AG04449 (cell line): ENCODE measurements at regions of chr11 and their contacts with region 1.

Region 1: GRCh38 chr11:131064373-131064991 is 148.2 kb upstream of the SNX19 start:
- DNase-seq: no peak
- H3K4me3 ChIP-seq: no peak overlapping the region
- CTCF ChIP-seq: peak; percentile 87

Region 2: GRCh38 chr11:130806746-130807145 is 257.7 kb before region 1 on chr11:
- CTCF ChIA-PET with region 1: no interaction called
- POLR2A ChIA-PET with region 1: no interaction called
- DNase-seq: no peak
- H3K4me3 ChIP-seq: no peak overlapping the region
- CTCF ChIP-seq: no peak

Region 3: DNA sequence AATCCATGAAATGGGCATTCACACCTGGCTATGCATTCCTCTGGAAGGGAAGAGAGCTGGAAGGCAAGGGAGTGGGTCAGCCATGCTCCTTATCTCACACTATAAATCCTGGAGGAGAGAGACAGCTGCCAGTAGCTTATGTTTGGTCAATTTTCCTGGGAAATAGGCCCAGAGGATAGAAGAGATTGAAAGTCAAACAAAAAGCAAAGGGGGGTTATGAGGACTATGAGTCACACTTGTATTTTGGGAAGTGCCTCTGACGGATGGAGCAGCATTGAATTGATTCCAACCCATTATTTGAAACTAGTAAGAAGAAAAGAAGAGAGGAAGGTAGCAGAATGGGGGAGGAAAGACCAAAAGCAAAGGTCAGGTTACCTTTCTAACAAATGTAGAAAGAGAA is 173.2 kb before region 1 on chr11:
- CTCF ChIA-PET with region 1: no interaction called
- POLR2A ChIA-PET with region 1: no interaction called
- DNase-seq: no peak
- H3K4me3 ChIP-seq: no peak overlapping the region
- CTCF ChIP-seq: no peak

Region 4: DNA sequence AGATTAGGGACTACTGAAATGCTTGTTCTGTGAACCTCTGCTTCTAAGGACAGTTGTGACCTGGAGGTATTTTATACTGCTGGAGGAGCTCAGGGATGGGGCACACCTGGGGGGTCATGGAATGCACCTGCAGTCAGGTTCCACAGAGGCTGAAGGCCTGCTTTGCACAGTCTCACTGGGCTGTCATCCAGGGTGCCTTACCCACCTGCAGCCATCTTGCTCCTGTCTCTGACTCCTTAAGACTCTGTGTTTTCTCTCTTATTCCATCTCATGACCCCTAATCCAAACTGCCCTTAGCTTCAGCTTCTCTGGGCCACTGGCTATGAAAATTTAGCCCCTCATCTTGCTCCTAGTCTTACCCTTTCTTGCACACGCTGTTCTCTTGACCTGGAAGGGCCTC is 21.2 kb before region 1 on chr11:
- CTCF ChIA-PET with region 1: interaction called, 30 read pairs
- POLR2A ChIA-PET with region 1: no interaction called
- DNase-seq: no peak
- H3K4me3 ChIP-seq: no peak overlapping the region
- CTCF ChIP-seq: no peak

Region 5: GRCh38 chr11:131089697-131090245 is 25.3 kb after region 1 on chr11:
- CTCF ChIA-PET with region 1: interaction called, 15 read pairs
- POLR2A ChIA-PET with region 1: no interaction called
- DNase-seq: no peak
- H3K4me3 ChIP-seq: no peak overlapping the region
- CTCF ChIP-seq: no peak

Region 6: DNA sequence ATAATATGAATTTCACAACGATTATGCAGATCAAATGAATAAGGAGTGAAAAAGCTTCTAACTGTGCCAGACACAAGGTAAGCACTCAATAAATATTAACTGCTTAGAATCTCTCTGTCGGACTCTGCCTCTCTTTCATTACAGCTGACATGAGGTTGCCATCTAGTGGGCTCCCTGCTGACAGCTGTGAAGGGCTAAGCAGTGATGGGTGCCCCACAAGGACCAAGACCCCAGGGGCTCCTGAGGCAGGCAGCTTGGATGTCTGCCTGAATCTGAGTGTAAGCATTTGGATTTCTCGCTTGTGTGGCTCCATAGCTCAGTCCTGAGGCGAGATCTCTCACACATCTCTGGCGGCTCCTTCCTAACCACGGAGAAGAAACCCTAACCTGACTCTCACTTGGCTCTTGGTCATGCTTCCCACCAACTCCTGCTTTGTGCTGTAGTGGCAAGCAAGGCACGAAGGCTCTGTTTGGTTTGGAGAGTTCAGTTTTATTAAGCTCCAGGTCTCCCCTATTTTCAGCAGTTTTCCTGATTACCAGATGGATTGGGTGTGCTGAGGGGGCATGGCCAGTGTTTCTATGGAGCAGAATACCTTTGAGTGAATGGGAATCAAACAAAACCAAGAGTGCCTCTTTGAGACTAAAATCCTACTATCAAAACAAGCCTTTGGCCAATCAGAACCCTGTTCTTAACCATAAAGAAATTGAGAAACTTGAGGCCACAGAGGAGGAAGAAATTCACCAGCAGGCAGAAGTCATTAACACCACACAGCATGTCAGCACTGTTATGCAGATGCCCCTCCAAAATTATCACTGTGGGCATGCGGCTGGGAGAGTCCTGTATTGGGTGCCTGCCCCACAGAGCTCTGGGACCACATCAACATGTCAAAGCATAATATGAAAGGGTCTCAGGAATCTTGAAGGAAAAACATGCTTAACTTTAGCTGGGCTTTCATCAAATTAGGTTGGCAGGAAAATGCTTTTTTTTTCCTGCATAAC is 153.1 kb after region 1 on chr11:
- CTCF ChIA-PET with region 1: interaction called, 221 read pairs
- POLR2A ChIA-PET with region 1: no interaction called
- DNase-seq: no peak
- H3K4me3 ChIP-seq: no peak overlapping the region
- CTCF ChIP-seq: peak; percentile 50

Region 7: DNA sequence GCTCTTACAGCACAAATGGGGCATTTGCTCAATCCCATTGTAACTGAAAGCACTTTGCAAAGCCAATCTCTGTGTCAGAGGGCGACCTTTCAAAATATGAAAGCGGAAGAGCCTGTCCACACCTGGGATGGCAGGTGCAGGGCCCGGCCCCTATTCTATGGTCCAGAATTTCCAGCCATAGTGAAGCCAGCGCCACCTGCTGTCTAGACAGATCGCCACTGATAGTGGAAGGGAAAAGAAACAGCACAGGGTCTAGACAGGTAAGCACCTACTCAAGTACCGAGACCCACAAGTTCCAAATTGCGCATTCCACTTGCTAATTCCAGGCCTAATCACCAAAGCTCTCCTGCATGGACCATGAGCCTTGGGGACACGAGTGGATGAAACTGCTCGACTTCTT is 447.3 kb after region 1 on chr11:
- CTCF ChIA-PET with region 1: interaction called, 17 read pairs
- POLR2A ChIA-PET with region 1: no interaction called
- DNase-seq: no peak
- H3K4me3 ChIP-seq: no peak overlapping the region
- CTCF ChIP-seq: peak; percentile 40

Region 8: GRCh38 chr11:131629925-131630540 is 565.6 kb after region 1 on chr11:
- CTCF ChIA-PET with region 1: interaction called, 11 read pairs
- POLR2A ChIA-PET with region 1: no interaction called
- DNase-seq: no peak
- H3K4me3 ChIP-seq: no peak overlapping the region
- CTCF ChIP-seq: no peak

Region 9: DNA sequence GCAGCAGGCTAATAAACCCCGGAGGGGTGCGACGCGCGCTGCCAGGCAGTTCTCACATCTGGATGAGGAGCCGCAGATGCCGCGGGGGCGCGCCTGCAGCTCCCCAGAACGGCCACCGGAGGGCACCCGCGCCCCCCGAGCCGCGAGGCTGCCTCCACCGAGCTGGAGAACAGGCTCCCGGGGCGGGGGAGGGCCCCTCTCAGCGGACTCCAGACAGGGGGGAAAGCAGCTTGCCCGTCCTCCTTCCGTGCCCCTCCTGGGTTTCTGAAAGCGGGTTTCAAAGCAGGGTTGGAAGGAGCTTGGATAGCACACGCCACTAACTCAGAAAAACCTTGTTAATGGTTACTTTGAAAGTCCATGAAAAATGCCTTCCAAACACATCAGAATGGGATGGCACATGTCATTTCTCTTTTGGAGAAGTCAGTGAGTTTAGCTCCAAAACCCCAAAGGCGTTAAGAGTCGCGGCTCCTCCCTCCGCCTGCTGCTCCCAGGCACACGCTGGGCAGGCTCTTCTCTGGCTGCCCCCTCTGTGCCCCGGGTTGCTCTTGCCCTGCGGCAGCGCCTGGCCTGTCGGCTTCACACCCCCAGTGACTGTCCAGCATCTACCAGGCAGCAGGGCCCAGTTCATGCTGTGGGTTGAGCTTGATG is 623.7 kb after region 1 on chr11:
- CTCF ChIA-PET with region 1: interaction called, 18 read pairs
- POLR2A ChIA-PET with region 1: no interaction called
- DNase-seq: no peak
- H3K4me3 ChIP-seq: peak overlapping the region; percentile 43
- CTCF ChIP-seq: peak; percentile 96